Naive thymus-derived CD4-positive, alpha-beta T cell (primary cell): ENCODE measurements at regions of chr6 and their contacts with region 1.

Region 1: GRCh38 chr6:167214206-167214605 is 56.4 kb upstream of the GPR31 start:
- DNase-seq: no peak
- ATAC-seq: no peak
- H3K4me3 ChIP-seq: no peak overlapping the region
- H3K4me3 Mint-ChIP-seq: no peak overlapping the region
- H3K27ac ChIP-seq: no peak overlapping the region
- H3K27ac Mint-ChIP-seq: no peak overlapping the region
- H3K4me1 ChIP-seq: no peaks in the 10 kb centered on the region
- H3K4me1 Mint-ChIP-seq: peaks cover 0 to 2% (median 0%) of the 10 kb centered on the region in 7 donors
- H3K27me3 ChIP-seq: no peaks in the 10 kb centered on the region
- H3K27me3 Mint-ChIP-seq: no peaks in the 10 kb centered on the region

Region 2: GRCh38 chr6:165515963-165516624 is 1698.1 kb before region 1 on chr6:
- CTCF ChIA-PET with region 1: no interaction called
- POLR2A ChIA-PET with region 1: no interaction called
- intact Hi-C with region 1: no loop called
- DNase-seq: no peak
- ATAC-seq: no peak
- H3K4me3 ChIP-seq: no peak overlapping the region
- H3K4me3 Mint-ChIP-seq: no peak overlapping the region
- H3K27ac ChIP-seq: no peak overlapping the region
- H3K27ac Mint-ChIP-seq: no peak overlapping the region
- H3K4me1 ChIP-seq: no peaks in the 10 kb centered on the region
- H3K4me1 Mint-ChIP-seq: peaks cover 0 to 8% (median 0%) of the 10 kb centered on the region in 7 donors
- H3K27me3 ChIP-seq: no peaks in the 10 kb centered on the region
- H3K27me3 Mint-ChIP-seq: no peaks in the 10 kb centered on the region

Region 3: GRCh38 chr6:167285077-167285770 is 71.0 kb after region 1 on chr6:
- CTCF ChIA-PET with region 1: interaction called, 5 read pairs
- POLR2A ChIA-PET with region 1: no interaction called
- intact Hi-C with region 1: loop called in 1 of 2 experiments (anchors 1 kb)
- DNase-seq: no peak
- ATAC-seq: no peak
- H3K4me3 ChIP-seq: no peak overlapping the region
- H3K4me3 Mint-ChIP-seq: no peak overlapping the region
- H3K27ac ChIP-seq: no peak overlapping the region
- H3K27ac Mint-ChIP-seq: no peak overlapping the region
- H3K4me1 ChIP-seq: no peaks in the 10 kb centered on the region
- H3K4me1 Mint-ChIP-seq: no peaks in the 10 kb centered on the region
- H3K27me3 ChIP-seq: no peaks in the 10 kb centered on the region
- H3K27me3 Mint-ChIP-seq: peaks cover 0 to 12% (median 0%) of the 10 kb centered on the region in 5 donors

Region 4: DNA sequence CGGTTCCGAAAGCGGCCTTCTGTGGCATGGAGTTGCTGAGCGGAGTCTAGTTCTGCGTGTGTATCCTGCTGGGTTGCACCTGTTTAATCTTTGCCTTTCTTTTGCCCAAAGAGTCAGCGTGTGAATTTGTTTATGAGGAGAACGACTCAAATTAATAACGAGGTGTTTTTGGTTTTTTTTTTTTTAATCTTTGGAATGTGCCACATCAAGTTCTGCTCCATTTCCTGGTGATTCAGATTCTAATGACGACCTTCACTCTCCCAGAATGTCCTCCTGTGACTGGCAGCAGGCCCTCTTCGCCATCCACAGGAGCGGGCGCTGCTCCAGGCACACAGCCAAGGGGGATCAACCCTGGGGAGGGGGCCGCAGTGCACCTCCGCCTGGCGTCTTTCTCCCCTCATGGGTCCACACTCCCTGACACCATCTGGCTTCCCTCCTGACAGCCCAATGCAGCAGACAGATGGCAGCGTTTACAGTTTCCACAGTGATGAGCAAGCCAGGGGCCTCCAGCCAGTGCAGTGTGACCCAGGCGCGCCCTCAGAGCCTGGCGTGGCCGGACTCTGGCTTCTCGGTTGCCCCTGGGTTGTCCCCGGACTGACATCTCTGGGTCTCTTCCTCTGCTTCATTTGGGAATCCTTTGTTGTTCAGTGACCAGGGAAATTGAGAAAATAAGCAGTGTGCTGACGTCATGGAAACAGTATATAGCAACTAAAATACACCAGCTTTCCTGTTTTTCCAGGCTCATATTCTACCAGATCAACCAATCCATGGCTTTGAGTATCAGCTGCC is 585.0 kb after region 1 on chr6:
- CTCF ChIA-PET with region 1: no interaction called
- POLR2A ChIA-PET with region 1: no interaction called
- intact Hi-C with region 1: no loop called
- DNase-seq: no peak
- ATAC-seq: no peak
- H3K4me3 ChIP-seq: no peak overlapping the region
- H3K4me3 Mint-ChIP-seq: no peak overlapping the region
- H3K27ac ChIP-seq: no peak overlapping the region
- H3K27ac Mint-ChIP-seq: no peak overlapping the region
- H3K4me1 ChIP-seq: no peaks in the 10 kb centered on the region
- H3K4me1 Mint-ChIP-seq: peaks cover 6 to 22% (median 14%) of the 10 kb centered on the region in 7 donors
- H3K27me3 ChIP-seq: peaks cover 0 to 5% of the 10 kb centered on the region in 2 donors
- H3K27me3 Mint-ChIP-seq: peaks cover 60 to 70% (median 63%) of the 10 kb centered on the region in 5 donors